ENCODE measurements at regions of chr2 and their contacts with region 1.

Region 1: DNA sequence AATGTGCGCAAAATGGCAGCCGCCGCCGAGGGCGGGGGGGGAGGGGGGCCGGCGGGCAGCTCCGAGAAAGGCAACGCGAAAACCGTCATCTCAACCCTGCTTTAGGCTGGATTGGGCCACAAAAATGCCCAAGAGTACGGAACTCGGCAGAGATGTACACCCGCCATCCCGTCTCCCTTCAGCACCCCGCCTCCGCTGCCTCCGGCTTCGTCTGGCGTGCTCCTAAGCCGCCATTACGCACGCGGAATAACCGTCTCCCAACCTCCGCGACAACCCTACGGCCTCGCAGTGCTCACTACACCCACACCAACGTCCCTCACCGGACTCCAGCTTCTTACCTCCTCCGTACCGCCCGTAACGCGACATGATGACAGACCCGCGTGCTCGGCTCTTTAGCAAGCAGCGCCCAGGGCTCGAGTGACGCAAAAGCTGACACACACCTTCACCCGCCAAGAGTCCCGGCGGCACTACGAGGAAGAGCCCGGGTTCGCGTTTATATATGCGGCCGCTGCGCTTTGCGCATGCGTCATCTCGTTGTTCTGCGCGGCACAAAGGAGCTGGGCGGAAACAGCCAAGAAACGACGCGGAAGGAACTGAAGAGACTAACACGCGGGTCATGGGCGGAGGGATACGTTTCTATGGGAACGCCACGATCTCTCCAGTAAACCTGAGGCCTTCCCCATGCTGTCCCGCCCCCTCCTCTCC is at the start of gene SRSF7:
- DNase-seq: peak; percentile 96 to 98 (median 98)
- H3K4me3 ChIP-seq: peak within 1 kb of the TSS; percentile 96 to 98
- H3K4me3 Mint-ChIP-seq: peak within 1 kb of the TSS; percentile 98 to 100 (median 100)
- H3K27ac ChIP-seq: peak within 1 kb of the TSS; percentile 93
- H3K27ac Mint-ChIP-seq: peak within 1 kb of the TSS; percentile 99 to 100 (median 100)
- H3K4me1 ChIP-seq: peaks cover 56% of the 10 kb centered on the region
- H3K4me1 Mint-ChIP-seq: peaks cover 42 to 70% (median 50%) of the 10 kb centered on the region in 4 donors
- H3K27me3 ChIP-seq: no peaks in the 10 kb centered on the region
- H3K27me3 Mint-ChIP-seq: peaks cover 0 to 3% of the 10 kb centered on the region in 2 donors
- total RNA-seq, gene SRSF7: 314 to 333 TPM

Region 2: DNA sequence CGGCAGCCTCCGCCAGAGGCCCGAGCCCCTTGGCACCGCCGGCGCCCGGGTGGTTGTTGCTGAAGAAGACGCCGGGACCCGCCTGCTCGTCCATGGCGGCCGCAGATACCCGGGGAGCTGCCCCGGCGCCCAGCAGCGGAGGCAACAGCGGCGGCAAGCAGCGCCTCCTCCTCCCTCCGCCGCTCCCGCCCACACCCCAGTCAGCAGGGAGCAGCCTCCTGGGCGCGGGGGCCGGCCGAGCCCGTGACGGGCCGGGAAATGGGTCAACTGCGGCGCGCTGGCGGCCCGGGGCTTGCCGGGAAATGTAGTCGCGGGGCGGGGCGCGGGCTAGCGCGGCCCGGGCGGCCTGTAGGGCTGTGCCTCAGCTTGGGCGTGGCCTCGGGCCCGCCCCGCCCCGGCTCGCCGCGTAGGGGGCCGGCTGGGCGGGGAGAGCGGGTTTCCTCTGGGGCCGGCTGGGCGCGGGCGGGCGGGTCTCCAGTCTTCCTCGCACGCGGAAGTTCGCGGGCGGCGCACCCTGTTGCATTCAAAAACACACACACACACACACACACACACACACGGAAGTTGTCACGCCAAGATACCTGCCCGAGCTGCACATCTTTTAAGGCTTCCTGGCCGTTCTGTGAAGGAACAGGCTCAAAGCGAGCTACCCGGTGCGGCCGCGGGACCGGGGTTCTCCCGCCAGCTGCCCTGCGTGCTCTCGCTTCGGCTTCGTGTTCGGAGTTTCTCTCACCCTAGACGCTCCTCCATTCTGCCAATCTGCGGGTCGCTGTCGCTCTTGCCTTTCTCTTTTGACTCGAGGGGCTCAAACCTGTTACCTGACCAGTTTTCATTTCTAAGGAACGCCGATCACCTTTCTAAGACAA is 1784.4 kb before region 1 on chr2 and contains the start of gene STRN:
- CTCF ChIA-PET with region 1: no interaction called
- POLR2A ChIA-PET with region 1: interaction called, 11 read pairs
- intact Hi-C with region 1: loop called (anchors 2 kb)
- DNase-seq: peak; percentile 97 to 100 (median 99)
- H3K4me3 ChIP-seq: peak within 1 kb of the TSS; percentile 88 to 89
- H3K4me3 Mint-ChIP-seq: peak within 1 kb of the TSS; percentile 96 to 99 (median 98)
- H3K27ac ChIP-seq: peak within 1 kb of the TSS; percentile 84
- H3K27ac Mint-ChIP-seq: peak within 1 kb of the TSS; percentile 97 to 99 (median 99)
- H3K4me1 ChIP-seq: peaks cover 43% of the 10 kb centered on the region
- H3K4me1 Mint-ChIP-seq: peaks cover 34 to 59% (median 44%) of the 10 kb centered on the region in 4 donors
- H3K27me3 ChIP-seq: no peaks in the 10 kb centered on the region
- H3K27me3 Mint-ChIP-seq: peaks cover 0 to 4% of the 10 kb centered on the region in 2 donors
- total RNA-seq, gene STRN: 29.0 to 33.4 TPM

Region 3: GRCh38 chr2:38572167-38572566 is 178.9 kb before region 1 on chr2:
- CTCF ChIA-PET with region 1: interaction called, 3 read pairs
- POLR2A ChIA-PET with region 1: interaction called, 12 read pairs
- intact Hi-C with region 1: no loop called
- DNase-seq: no peak
- H3K4me3 ChIP-seq: no peak overlapping the region
- H3K4me3 Mint-ChIP-seq: peak overlapping the region in 1 of 8 donors; percentile 9
- H3K27ac ChIP-seq: peak overlapping the region; percentile 30
- H3K27ac Mint-ChIP-seq: peak overlapping the region; percentile 13 to 82 (median 58)
- H3K4me1 ChIP-seq: peaks cover 37% of the 10 kb centered on the region
- H3K4me1 Mint-ChIP-seq: peaks cover 19 to 47% (median 31%) of the 10 kb centered on the region in 4 donors
- H3K27me3 ChIP-seq: no peaks in the 10 kb centered on the region
- H3K27me3 Mint-ChIP-seq: no peaks in the 10 kb centered on the region

Region 4: DNA sequence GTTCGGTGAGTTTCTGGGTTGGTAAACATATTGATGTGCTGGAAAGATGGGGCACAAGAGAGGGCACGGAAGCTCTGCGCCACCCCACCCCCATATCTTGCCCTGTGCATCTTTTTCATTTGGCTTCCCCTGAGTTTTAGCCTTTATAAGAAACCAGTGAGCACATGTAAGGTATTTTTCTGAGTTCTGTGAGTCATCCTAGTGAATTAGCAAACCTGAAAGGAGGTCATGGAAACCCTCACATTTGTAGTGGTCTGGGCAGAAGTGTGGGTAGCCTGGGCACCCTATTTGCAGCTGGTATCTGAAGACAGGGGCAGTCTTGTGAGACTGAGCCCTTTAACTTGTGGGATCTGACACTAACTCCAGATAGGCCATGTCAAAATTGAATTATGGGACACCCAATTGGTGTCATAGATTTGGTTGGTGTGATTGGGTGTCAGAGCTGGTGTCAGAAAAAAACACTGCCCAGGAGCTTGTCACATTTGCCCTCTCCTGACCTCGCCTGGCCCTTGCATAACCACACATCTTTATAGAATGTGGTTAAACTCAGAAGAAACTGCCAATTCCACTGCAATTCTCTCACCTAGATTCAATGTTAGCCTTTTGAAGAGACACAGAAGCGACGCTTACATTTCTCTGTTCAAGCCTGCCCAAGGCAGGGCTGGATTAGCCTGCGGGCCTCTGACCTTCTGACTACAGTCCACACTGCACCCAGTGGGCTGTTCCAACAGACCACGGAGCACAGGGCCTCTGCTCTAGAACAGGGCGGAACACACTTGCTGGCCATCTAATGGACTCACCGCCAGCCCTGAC is 97.1 kb before region 1 on chr2:
- CTCF ChIA-PET with region 1: no interaction called
- POLR2A ChIA-PET with region 1: interaction called, 25 read pairs
- intact Hi-C with region 1: no loop called
- DNase-seq: peak; percentile 66 to 82 (median 70)
- H3K4me3 ChIP-seq: peak overlapping the region in 1 of 2 donors; percentile 18
- H3K4me3 Mint-ChIP-seq: peak overlapping the region in 7 of 8 donors; percentile 61 to 87 (median 80)
- H3K27ac ChIP-seq: peak overlapping the region; percentile 51
- H3K27ac Mint-ChIP-seq: peak overlapping the region; percentile 87 to 97 (median 97)
- H3K4me1 ChIP-seq: peaks cover 56% of the 10 kb centered on the region
- H3K4me1 Mint-ChIP-seq: peaks cover 32 to 71% (median 50%) of the 10 kb centered on the region in 4 donors
- H3K27me3 ChIP-seq: no peaks in the 10 kb centered on the region
- H3K27me3 Mint-ChIP-seq: no peaks in the 10 kb centered on the region

Region 5: DNA sequence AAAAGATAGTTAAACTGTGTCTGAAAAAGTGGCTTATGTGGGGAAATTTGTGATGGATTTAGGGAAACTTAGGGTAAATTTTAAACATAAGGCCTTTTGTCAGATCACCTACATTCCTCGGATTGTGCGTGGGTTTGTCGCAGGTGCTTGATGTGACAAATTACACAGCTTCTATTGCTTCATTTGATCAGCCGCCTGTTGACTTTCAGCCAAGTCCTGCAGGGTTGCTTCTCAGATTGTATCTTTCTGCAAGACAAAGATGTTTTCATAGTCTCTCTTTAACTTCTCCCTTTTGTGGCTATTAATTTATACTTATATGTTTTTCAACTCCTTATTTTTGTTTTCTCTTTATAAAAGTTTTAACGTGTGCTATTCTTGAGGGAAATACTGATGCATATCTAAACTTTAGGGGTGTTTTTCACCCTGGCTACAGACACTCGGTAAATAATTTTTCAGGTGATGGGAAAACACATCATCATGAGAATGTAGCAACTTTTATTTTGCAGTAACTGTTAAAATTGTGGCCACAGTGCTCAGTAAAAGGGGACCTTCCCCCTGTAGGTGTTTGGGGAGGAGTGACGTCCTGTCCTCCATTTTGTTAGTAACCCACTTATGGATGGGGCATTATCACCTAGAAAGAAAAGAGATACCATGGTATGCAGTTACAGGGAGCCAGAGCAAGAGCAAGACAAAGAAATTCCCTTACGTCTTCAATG is 53.8 kb before region 1 on chr2:
- CTCF ChIA-PET with region 1: interaction called, 5 read pairs
- POLR2A ChIA-PET with region 1: interaction called, 18 read pairs
- intact Hi-C with region 1: no loop called
- DNase-seq: peak; percentile 74 to 87 (median 75)
- H3K4me3 ChIP-seq: peak overlapping the region in 1 of 2 donors; percentile 0
- H3K4me3 Mint-ChIP-seq: peak overlapping the region; percentile 43 to 81 (median 76)
- H3K27ac ChIP-seq: peak overlapping the region; percentile 72
- H3K27ac Mint-ChIP-seq: peak overlapping the region; percentile 93 to 98 (median 97)
- H3K4me1 ChIP-seq: peaks cover 100% of the 10 kb centered on the region
- H3K4me1 Mint-ChIP-seq: peaks cover 52 to 92% (median 74%) of the 10 kb centered on the region in 4 donors
- H3K27me3 ChIP-seq: no peaks in the 10 kb centered on the region
- H3K27me3 Mint-ChIP-seq: no peaks in the 10 kb centered on the region

Region 6: GRCh38 chr2:38728694-38729093 is 22.3 kb before region 1 on chr2:
- CTCF ChIA-PET with region 1: interaction called, 4 read pairs
- POLR2A ChIA-PET with region 1: interaction called, 33 read pairs
- intact Hi-C with region 1: no loop called
- DNase-seq: no peak
- H3K4me3 ChIP-seq: no peak overlapping the region
- H3K4me3 Mint-ChIP-seq: no peak overlapping the region
- H3K27ac ChIP-seq: no peak overlapping the region
- H3K27ac Mint-ChIP-seq: peak overlapping the region in 2 of 7 donors; percentile 10 to 53
- H3K4me1 ChIP-seq: peaks cover 21% of the 10 kb centered on the region
- H3K4me1 Mint-ChIP-seq: peaks cover 10 to 24% (median 18%) of the 10 kb centered on the region in 4 donors
- H3K27me3 ChIP-seq: no peaks in the 10 kb centered on the region
- H3K27me3 Mint-ChIP-seq: no peaks in the 10 kb centered on the region

Region 7: DNA sequence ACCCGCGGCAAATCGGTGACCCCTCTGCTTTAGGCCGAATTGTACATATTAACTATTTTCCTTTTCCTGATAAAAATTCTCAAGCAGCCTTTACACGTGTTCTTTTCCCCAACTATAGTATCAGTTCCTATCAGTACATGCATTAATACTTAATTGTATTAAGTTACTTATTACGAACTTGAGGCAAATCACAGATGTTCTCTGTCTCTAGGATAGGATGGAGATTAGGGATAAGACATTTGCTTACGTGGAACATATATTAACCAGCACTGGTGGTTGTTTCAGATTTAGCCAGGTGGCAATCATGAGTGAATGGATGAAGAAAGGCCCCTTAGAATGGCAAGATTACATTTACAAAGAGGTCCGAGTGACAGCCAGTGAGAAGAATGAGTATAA is 27.6 kb after region 1 on chr2:
- CTCF ChIA-PET with region 1: no interaction called
- POLR2A ChIA-PET with region 1: interaction called, 42 read pairs
- intact Hi-C with region 1: loop called (anchors 1 kb)
- DNase-seq: no peak
- H3K4me3 ChIP-seq: peak overlapping the region; percentile 74 to 77
- H3K4me3 Mint-ChIP-seq: peak overlapping the region; percentile 94 to 99 (median 98)
- H3K27ac ChIP-seq: peak overlapping the region; percentile 69
- H3K27ac Mint-ChIP-seq: peak overlapping the region; percentile 93 to 100 (median 97)
- H3K4me1 ChIP-seq: peaks cover 5% of the 10 kb centered on the region
- H3K4me1 Mint-ChIP-seq: peaks cover 12 to 14% (median 13%) of the 10 kb centered on the region in 4 donors
- H3K27me3 ChIP-seq: no peaks in the 10 kb centered on the region
- H3K27me3 Mint-ChIP-seq: peaks cover 4 to 7% of the 10 kb centered on the region in 2 donors

Region 8: DNA sequence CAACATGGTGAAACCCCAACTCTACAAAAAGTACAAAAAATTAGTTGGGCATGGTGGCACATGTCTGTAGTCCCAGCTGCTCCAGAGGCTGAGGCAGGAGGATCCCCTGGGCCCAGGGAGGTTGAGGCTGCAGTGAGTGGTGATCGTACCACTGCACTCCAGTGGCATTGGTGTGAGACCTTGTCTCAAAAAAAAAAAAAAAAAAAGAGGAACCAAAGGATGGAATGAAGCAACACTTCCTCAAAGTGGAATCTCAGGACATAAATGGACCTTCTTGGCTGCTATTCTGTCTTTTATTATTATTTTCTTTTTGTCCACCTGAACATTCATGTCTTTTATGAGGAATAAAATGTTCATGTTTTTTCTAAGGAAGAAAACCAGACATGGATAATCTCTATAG is 40.7 kb after region 1 on chr2:
- CTCF ChIA-PET with region 1: no interaction called
- POLR2A ChIA-PET with region 1: no interaction called
- intact Hi-C with region 1: no loop called
- DNase-seq: no peak
- H3K4me3 ChIP-seq: no peak overlapping the region
- H3K4me3 Mint-ChIP-seq: no peak overlapping the region
- H3K27ac ChIP-seq: no peak overlapping the region
- H3K27ac Mint-ChIP-seq: no peak overlapping the region
- H3K4me1 ChIP-seq: no peaks in the 10 kb centered on the region
- H3K4me1 Mint-ChIP-seq: no peaks in the 10 kb centered on the region
- H3K27me3 ChIP-seq: no peaks in the 10 kb centered on the region
- H3K27me3 Mint-ChIP-seq: no peaks in the 10 kb centered on the region